ENCODE measurements at regions of chr3 and their contacts with region 1.

Region 1: DNA sequence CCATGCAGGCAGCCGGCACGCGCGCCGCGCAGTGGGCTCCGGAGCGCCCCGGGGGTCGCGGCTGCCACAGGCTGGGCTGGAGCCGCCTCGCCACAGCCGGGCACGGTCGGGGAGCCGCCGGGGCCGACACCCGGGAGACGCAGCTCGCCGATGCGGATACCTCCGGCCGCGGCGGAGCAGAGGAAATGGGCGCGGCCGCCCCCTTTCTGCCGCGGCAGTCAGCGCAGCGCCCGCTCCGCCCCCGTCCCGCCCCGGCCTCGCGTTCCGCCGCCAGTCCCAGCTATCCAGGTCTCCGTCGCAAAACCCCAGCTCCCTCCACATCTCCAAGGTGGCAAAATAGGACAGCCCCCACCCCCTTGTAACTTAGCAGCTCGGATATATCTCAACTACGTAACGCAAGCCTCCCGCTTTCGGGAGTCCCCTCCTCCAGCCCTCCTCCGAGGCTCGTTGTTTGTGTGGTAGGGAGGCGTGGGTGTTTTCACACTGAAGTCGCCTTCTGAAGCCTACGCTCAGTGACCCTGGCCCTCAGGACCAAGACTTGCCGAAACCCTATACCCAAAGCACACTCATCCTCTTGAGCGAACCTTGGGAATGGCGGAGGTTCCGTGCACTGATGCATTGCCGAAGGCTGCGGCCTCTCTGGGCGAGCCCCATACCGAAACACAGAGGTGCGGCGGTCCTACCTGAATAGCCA is at the start of gene SH3BP5:
- DNase-seq: peak; percentile 73
- H3K4me3 Mint-ChIP-seq: peak within 1 kb of the TSS; percentile 94
- H3K27ac Mint-ChIP-seq: peak within 1 kb of the TSS; percentile 89
- H3K4me1 Mint-ChIP-seq: peaks cover 72% of the 10 kb centered on the region
- H3K27me3 Mint-ChIP-seq: no peaks in the 10 kb centered on the region
- total RNA-seq, gene SH3BP5: 28.0 and 30.3 TPM in 2 replicates

Region 2: DNA sequence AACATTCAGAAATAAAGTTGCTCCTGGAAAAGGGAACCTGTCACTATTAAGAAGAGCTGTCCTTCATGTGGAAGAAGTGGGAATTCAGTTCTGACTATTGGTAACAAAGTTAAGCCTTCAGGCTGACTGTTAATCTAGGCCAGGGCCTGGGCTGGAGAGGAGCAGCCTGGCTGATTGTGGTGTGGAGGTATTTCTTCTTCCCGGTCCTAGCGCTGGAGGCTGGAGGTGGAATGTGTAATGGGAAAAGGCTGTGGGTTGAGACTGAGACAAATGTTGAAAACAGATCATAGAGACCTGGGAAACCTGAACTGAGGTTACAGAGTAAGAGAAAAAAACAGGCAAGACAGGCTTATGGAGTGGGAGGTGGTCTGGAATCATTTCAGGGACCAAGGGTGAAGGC is 23.6 kb after region 1 on chr3:
- intact Hi-C with region 1: loop called (anchors 1 kb)
- DNase-seq: no peak
- H3K4me3 Mint-ChIP-seq: no peak overlapping the region
- H3K27ac Mint-ChIP-seq: peak overlapping the region; percentile 93
- H3K4me1 Mint-ChIP-seq: peaks cover 43% of the 10 kb centered on the region
- H3K27me3 Mint-ChIP-seq: no peaks in the 10 kb centered on the region

Region 3: GRCh38 chr3:16482770-16483531 is 1150.4 kb after region 1 on chr3:
- intact Hi-C with region 1: no loop called
- DNase-seq: peak; percentile 26
- H3K4me3 Mint-ChIP-seq: peak overlapping the region; percentile 75
- H3K27ac Mint-ChIP-seq: peak overlapping the region; percentile 75
- H3K4me1 Mint-ChIP-seq: peaks cover 84% of the 10 kb centered on the region
- H3K27me3 Mint-ChIP-seq: no peaks in the 10 kb centered on the region

Measured in activated T-helper 1 cell treated with anti-CD3 and anti-CD28 coated beads, Interleukin-12 subunit alpha, Interleukin-12 subunit beta, Interleukin-2, Interleukin-4 antibody, amounts not matched to agents 30 ng/mL and 10 ng/mL and 1 ng/mL, durations not matched to agents 14 hours and 24 hours and 36 hours (primary cell).